ENCODE measurements at regions of chr20 and their contacts with region 1.

Region 1: DNA sequence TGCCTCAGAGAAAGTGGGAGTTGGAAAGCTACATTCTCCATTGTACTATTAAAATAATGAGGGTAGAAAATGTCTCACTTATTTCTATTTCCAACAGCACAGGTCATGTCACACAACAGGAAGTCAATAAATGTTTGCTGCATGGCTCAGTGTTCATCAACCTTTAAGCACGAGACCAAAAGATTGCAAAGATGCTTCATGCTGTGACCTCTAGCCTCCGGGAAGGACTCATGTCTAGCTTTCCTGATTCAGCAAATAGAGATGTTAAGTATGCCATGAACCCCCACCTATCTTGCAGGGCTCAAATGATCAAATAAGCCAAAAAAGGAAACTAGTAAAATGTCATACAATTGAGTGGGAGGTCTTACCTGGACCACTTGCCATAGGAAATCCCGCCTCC is 57.4 kb downstream of the NCOA6 start:
- DNase-seq: no peak
- ATAC-seq: no peak
- H3K4me3 ChIP-seq: no peak overlapping the region
- H3K27ac ChIP-seq: no peak overlapping the region
- H3K4me1 ChIP-seq: no peaks in the 10 kb centered on the region
- H3K27me3 ChIP-seq: no peaks in the 10 kb centered on the region
- CTCF ChIP-seq: no peak

Region 2: GRCh38 chr20:34747479-34747878 is 20.6 kb before region 1 on chr20:
- CTCF ChIA-PET with region 1: no interaction called
- POLR2A ChIA-PET with region 1: interaction called, 10 read pairs
- in situ Hi-C with region 1: no loop called
- intact Hi-C with region 1: no loop called
- DNase-seq: no peak
- ATAC-seq: no peak
- H3K4me3 ChIP-seq: no peak overlapping the region
- H3K27ac ChIP-seq: no peak overlapping the region
- H3K4me1 ChIP-seq: no peaks in the 10 kb centered on the region
- H3K27me3 ChIP-seq: no peaks in the 10 kb centered on the region
- CTCF ChIP-seq: no peak

Region 3: GRCh38 chr20:34797012-34797995 is 29.2 kb after region 1 on chr20:
- CTCF ChIA-PET with region 1: interaction called, 13 read pairs
- POLR2A ChIA-PET with region 1: interaction called, 3 read pairs
- in situ Hi-C with region 1: no loop called
- intact Hi-C with region 1: no loop called
- DNase-seq: no peak
- ATAC-seq: no peak
- H3K4me3 ChIP-seq: no peak overlapping the region
- H3K27ac ChIP-seq: no peak overlapping the region
- H3K4me1 ChIP-seq: no peaks in the 10 kb centered on the region
- H3K27me3 ChIP-seq: no peaks in the 10 kb centered on the region
- CTCF ChIP-seq: no peak

Region 4: DNA sequence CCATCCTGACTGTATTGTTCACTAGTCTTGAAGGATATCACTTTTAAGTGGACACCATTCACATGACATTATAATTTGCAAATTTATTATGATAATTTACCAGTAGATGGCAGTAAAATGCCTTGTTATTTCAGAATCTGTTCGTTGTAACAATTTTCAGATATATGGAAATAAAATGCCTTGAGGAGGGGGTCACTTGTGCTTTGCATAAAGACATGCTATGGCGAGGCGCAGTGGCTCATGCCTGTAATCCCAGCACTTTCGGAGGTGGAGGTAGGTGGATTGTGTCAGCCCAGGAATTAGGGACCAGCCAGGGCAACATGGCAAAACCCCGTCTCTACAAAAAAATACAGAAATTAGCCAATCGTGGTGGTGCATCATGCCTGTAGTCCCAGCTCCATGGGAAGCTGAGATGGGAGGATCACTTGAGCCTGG is 66.4 kb after region 1 on chr20:
- CTCF ChIA-PET with region 1: no interaction called
- POLR2A ChIA-PET with region 1: no interaction called
- in situ Hi-C with region 1: no loop called
- intact Hi-C with region 1: no loop called
- DNase-seq: peak; percentile 22
- ATAC-seq: peak; percentile 79
- H3K4me3 ChIP-seq: no peak overlapping the region; a peak in 1 of 4 replicates
- H3K27ac ChIP-seq: no peak overlapping the region
- H3K4me1 ChIP-seq: no peaks in the 10 kb centered on the region
- H3K27me3 ChIP-seq: no peaks in the 10 kb centered on the region
- CTCF ChIP-seq: peak; percentile 63

Region 5: GRCh38 chr20:35269055-35269781 is 501.1 kb after region 1 on chr20:
- CTCF ChIA-PET with region 1: no interaction called
- POLR2A ChIA-PET with region 1: no interaction called
- in situ Hi-C with region 1: no loop called
- intact Hi-C with region 1: no loop called
- DNase-seq: no peak
- ATAC-seq: peak; percentile 81
- H3K4me3 ChIP-seq: no peak overlapping the region
- H3K27ac ChIP-seq: no peak overlapping the region
- H3K4me1 ChIP-seq: no peaks in the 10 kb centered on the region
- H3K27me3 ChIP-seq: no peaks in the 10 kb centered on the region
- CTCF ChIP-seq: peak; percentile 93